Activated T-helper 1 cell treated with anti-CD3 and anti-CD28 coated beads, Interleukin-12 subunit alpha, Interleukin-12 subunit beta, Interleukin-2, Interleukin-4 antibody, amounts not matched to agents 30 ng/mL and 10 ng/mL and 1 ng/mL, durations not matched to agents 14 hours and 24 hours and 36 hours (primary cell): ENCODE measurements at regions of chrX and their contacts with region 1.

Region 1: DNA sequence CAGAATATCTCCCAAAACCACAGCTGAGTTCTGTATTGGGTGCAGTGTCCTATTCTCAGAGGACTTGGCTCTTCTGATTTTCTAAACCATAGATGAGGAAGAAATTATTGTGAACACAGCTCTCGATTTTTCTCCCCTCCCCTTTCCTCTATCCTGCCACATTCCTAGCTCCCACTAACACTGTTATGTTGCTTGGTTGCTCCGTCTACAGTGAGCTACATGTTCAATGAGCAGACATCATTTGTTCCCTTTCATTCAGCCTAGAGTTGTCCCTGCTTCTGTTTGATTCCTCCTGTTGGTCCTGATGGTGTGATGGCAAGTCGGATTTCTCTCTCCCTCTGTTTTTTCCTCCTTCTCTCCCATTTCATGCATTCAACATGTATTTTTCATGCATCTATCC is 65.9 kb downstream of the DIPK2B start:
- DNase-seq: no peak
- H3K4me3 Mint-ChIP-seq: no peak overlapping the region
- H3K27ac Mint-ChIP-seq: no peak overlapping the region
- H3K4me1 Mint-ChIP-seq: no peaks in the 10 kb centered on the region
- H3K27me3 Mint-ChIP-seq: peaks cover 3% of the 10 kb centered on the region

Region 2: GRCh38 chrX:45186643-45187026 is 51.9 kb after region 1 on chrX:
- intact Hi-C with region 1: loop called (anchors 5 kb)
- DNase-seq: no peak
- H3K4me3 Mint-ChIP-seq: peak overlapping the region; percentile 87
- H3K27ac Mint-ChIP-seq: peak overlapping the region; percentile 78
- H3K4me1 Mint-ChIP-seq: peaks cover 26% of the 10 kb centered on the region
- H3K27me3 Mint-ChIP-seq: no peaks in the 10 kb centered on the region